Mammary epithelial cell (primary cell): ENCODE measurements at regions of chr5 and their contacts with region 1.

Region 1: GRCh38 chr5:52948418-52949076 is 40.6 kb upstream of the ITGA2 start:
- DNase-seq: peak; percentile 78
- H3K4me3 ChIP-seq: no peak overlapping the region
- H3K27ac ChIP-seq: peak overlapping the region; percentile 44
- H3K4me1 ChIP-seq: peaks cover 49% of the 10 kb centered on the region
- H3K27me3 ChIP-seq: no peaks in the 10 kb centered on the region
- CTCF ChIP-seq: peak; percentile 85 to 88

Region 2: GRCh38 chr5:52502460-52502999 is 446.0 kb before region 1 on chr5:
- CTCF ChIA-PET with region 1: no interaction called
- dilution Hi-C with region 1: no loop called
- in situ Hi-C with region 1: no loop called
- intact Hi-C with region 1: no loop called
- DNase-seq: no peak
- H3K4me3 ChIP-seq: no peak overlapping the region
- H3K27ac ChIP-seq: no peak overlapping the region
- H3K4me1 ChIP-seq: no peaks in the 10 kb centered on the region
- H3K27me3 ChIP-seq: peaks cover 3% of the 10 kb centered on the region
- CTCF ChIP-seq: no peak

Region 3: GRCh38 chr5:52743970-52744369 is 204.6 kb before region 1 on chr5:
- CTCF ChIA-PET with region 1: no interaction called
- dilution Hi-C with region 1: no loop called
- in situ Hi-C with region 1: no loop called
- intact Hi-C with region 1: no loop called
- DNase-seq: peak; percentile 37
- H3K4me3 ChIP-seq: no peak overlapping the region
- H3K27ac ChIP-seq: no peak overlapping the region
- H3K4me1 ChIP-seq: peaks cover 9% of the 10 kb centered on the region
- H3K27me3 ChIP-seq: no peaks in the 10 kb centered on the region
- CTCF ChIP-seq: no peak

Region 4: DNA sequence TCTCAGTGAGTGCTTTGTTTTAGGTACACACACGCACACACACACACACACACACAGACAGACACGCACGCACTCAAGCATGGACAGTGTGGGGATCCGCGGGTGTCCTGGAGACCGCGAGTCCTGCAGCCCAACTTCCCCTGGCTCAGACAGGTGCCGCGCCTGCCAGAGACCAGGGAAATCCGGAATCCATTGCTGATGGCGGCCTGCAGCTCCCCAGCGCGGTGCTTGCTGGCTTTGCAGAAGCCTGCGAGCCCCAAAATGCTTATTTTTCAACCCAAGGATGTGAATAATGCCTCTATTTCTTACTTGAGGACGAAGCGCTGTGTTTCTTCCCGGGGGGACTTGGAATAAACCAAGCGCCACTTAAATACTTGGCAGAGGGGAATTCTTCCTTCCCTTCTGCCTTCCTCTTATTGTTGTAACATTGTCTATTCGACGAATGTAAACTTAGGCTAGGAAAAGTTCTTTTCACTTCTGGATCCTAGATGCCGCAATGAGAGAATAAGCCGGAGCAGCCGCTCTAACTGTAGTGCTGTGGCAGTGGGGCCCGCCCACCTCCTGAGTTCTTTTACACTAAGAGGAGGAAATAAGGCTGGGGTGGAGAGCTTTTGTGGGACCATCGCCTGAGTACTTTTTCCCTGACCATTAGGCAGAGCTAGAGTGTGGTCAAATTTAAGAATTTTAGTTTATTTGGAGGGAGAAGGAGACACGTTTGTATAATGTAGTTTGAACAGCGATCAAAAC is 41.4 kb after region 1 on chr5:
- CTCF ChIA-PET with region 1: interaction called, 14 read pairs
- dilution Hi-C with region 1: loop called (anchors 5 kb)
- in situ Hi-C with region 1: loop called in 1 of 2 experiments (anchors 5 kb)
- intact Hi-C with region 1: loop called (anchors 1 kb)
- DNase-seq: no peak
- H3K4me3 ChIP-seq: peak overlapping the region; percentile 69 to 95 (median 88)
- H3K27ac ChIP-seq: peak overlapping the region; percentile 95
- H3K4me1 ChIP-seq: peaks cover 65% of the 10 kb centered on the region
- H3K27me3 ChIP-seq: no peaks in the 10 kb centered on the region
- CTCF ChIP-seq: peak; percentile 29 to 46

Region 5: GRCh38 chr5:53041071-53041692 is 92.6 kb after region 1 on chr5:
- CTCF ChIA-PET with region 1: interaction called, 9 read pairs
- dilution Hi-C with region 1: no loop called
- in situ Hi-C with region 1: loop called (anchors 10 kb)
- intact Hi-C with region 1: loop called (anchors 2 kb)
- DNase-seq: no peak
- H3K4me3 ChIP-seq: no peak overlapping the region
- H3K27ac ChIP-seq: no peak overlapping the region
- H3K4me1 ChIP-seq: peaks cover 37% of the 10 kb centered on the region
- H3K27me3 ChIP-seq: no peaks in the 10 kb centered on the region
- CTCF ChIP-seq: no peak

Region 6: GRCh38 chr5:53089345-53089991 is 140.9 kb after region 1 on chr5:
- CTCF ChIA-PET with region 1: no interaction called
- dilution Hi-C with region 1: loop called (anchors 5 kb)
- in situ Hi-C with region 1: loop called (anchors 10 kb)
- intact Hi-C with region 1: no loop called
- DNase-seq: no peak
- H3K4me3 ChIP-seq: no peak overlapping the region
- H3K27ac ChIP-seq: no peak overlapping the region
- H3K4me1 ChIP-seq: no peaks in the 10 kb centered on the region
- H3K27me3 ChIP-seq: no peaks in the 10 kb centered on the region
- CTCF ChIP-seq: no peak

Region 7: DNA sequence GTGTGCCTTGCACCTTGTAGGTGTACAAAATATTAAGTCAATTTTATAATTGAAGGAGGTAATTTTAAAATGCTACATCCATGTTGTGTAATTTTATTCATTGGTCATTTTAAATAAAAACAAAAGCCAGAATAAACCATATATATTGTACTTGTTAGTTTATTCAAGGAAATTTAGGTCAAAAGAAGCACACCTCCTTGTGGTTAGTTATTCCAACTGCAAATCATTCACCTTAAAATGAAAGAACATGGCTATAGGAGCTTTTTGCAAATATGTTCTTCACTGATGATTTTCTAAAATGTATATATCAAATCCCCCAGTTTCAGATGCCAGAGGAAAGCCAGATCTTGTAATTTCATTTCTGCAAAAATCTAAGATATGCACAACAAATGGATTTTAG is 166.4 kb after region 1 on chr5:
- CTCF ChIA-PET with region 1: no interaction called
- dilution Hi-C with region 1: no loop called
- in situ Hi-C with region 1: no loop called
- intact Hi-C with region 1: loop called (anchors 1 kb)
- DNase-seq: peak; percentile 23
- H3K4me3 ChIP-seq: no peak overlapping the region
- H3K27ac ChIP-seq: no peak overlapping the region
- H3K4me1 ChIP-seq: peaks cover 9% of the 10 kb centered on the region
- H3K27me3 ChIP-seq: no peaks in the 10 kb centered on the region
- CTCF ChIP-seq: peak; percentile 25 to 38